Cardiac septum (tissue), 1 donor: ENCODE measurements at regions of chr2 and their contacts with region 1.

Region 1: GRCh38 chr2:10400568-10400977 is 47.6 kb downstream of the ODC1 start:
- DNase-seq: peak; percentile 83

Region 2: GRCh38 chr2:10185046-10185445 is 215.5 kb before region 1 on chr2:
- intact Hi-C with region 1: no loop called
- DNase-seq: no peak

Region 3: DNA sequence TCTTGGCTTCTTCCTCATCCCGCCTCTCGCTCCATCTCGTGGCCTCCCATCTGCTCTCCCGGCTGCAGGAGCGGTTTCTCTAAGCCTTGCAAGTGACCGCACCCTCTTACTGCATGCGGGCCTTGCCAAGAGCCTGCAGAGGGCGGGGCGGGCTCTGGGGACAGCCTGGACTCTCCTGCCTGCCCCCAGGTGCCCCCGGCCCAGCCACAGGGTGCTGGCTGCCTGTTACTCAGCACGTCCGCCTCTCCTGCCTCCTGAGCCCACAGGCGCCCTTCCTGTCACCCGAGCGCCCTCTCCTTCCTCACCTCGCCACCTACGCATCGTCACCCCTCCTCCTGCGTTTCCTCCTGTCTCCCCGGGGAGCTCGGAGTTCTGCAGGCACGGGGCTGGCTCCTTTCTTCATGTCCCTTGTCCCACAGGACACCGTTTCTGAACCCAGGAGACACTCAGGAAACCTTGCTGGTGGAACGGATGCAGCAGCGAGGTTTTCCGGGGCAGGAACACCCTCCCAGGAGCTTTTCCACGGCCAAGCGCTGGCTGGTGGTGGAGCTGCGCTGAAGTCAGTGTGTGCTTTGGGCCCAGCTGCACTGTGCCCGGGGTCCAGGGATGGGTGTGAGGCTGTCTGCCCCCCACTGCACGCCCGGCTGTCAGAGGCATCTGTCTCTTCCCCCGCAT is 69.4 kb before region 1 on chr2:
- intact Hi-C with region 1: loop called (anchors 5 kb)
- DNase-seq: peak; percentile 93

Region 4: GRCh38 chr2:10591207-10591606 is 190.6 kb after region 1 on chr2:
- intact Hi-C with region 1: no loop called
- DNase-seq: no peak